PC-9 (cell line): ENCODE measurements at regions of chr7 and their contacts with region 1.

Region 1: GRCh38 chr7:71851776-71852498 is 560.2 kb downstream of the CALN1 start:
- DNase-seq: no peak
- H3K4me3 ChIP-seq: no peak overlapping the region
- H3K27ac ChIP-seq: no peak overlapping the region
- H3K4me1 ChIP-seq: no peaks in the 10 kb centered on the region
- H3K27me3 ChIP-seq: peaks cover 12% of the 10 kb centered on the region
- CTCF ChIP-seq: no peak

Region 2: DNA sequence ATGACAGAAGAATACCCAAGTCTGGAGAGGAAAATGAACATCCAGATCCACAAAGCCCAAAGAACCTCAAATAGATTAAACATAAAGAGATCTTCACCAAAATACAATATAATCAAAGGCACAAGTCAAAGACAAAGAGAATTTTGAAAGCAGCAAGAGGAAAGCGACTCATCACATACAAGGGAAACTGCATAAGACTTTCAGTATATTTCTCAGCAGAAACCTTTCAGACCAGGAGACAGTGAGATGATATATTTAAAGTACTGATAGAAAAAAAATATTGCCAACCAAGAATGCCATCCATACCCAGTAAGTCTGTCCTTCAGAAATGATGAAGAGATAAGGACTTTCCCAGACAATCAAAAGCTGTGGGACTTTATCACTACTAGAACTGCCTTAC is 801.4 kb before region 1 on chr7:
- CTCF ChIA-PET with region 1: no interaction called
- POLR2A ChIA-PET with region 1: interaction called, 21 read pairs
- intact Hi-C with region 1: no loop called
- DNase-seq: no peak
- H3K4me3 ChIP-seq: no peak overlapping the region
- H3K27ac ChIP-seq: no peak overlapping the region
- H3K4me1 ChIP-seq: no peaks in the 10 kb centered on the region
- H3K27me3 ChIP-seq: 0 out of 2 replicates have a peak, but pooled peaks cover 5% of the 10 kb centered on the region
- CTCF ChIP-seq: no peak